ENCODE measurements at regions of chr3 and their contacts with region 1.

Region 1: GRCh38 chr3:66500576-66501482 is at the start of gene LRIG1:
- DNase-seq: peak; percentile 96 to 99
- H3K4me3 ChIP-seq: peak within 1 kb of the TSS; percentile 85 to 98
- H3K27ac ChIP-seq: peak within 1 kb of the TSS; percentile 90 to 92
- H3K4me1 ChIP-seq: peaks cover 0 to 23% of the 10 kb centered on the region in 2 donors
- H3K27me3 ChIP-seq: no peaks in the 10 kb centered on the region
- CTCF ChIP-seq: peak in 2 of 3 experiments; percentile 38 to 47
- total RNA-seq, gene LRIG1: 62.3 TPM

Region 2: DNA sequence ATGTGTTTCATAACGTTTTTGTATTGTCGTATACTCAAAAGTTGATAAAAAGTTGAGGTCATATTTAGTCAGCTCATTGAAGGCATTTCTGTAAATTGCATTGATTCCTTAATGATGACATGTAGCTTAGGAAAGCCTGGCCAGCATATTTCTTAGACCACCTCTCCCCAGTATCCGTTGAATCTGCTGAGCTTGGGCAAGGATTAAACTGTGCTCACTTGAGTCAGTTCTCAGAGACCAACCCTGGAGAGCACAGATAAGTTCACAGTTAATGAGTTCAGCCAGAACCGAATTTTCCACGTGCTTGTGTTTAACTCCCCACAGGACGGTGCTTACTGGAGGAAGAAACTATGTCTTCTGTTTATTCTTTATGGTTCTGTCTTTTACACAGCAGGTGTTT is 147.3 kb before region 1 on chr3:
- intact Hi-C with region 1: no loop called
- DNase-seq: no peak
- H3K4me3 ChIP-seq: no peak overlapping the region
- H3K27ac ChIP-seq: no peak overlapping the region
- H3K4me1 ChIP-seq: no peaks in the 10 kb centered on the region
- H3K27me3 ChIP-seq: no peaks in the 10 kb centered on the region
- CTCF ChIP-seq: no peak

Region 3: GRCh38 chr3:66397745-66398144 is 103.1 kb before region 1 on chr3:
- intact Hi-C with region 1: loop called (anchors 2 kb)
- DNase-seq: peak in 1 of 2 donors; percentile 62
- H3K4me3 ChIP-seq: no peak overlapping the region
- H3K27ac ChIP-seq: peak overlapping the region; percentile 44 to 75
- H3K4me1 ChIP-seq: peaks cover 28 to 60% of the 10 kb centered on the region in 2 donors
- H3K27me3 ChIP-seq: no peaks in the 10 kb centered on the region
- CTCF ChIP-seq: no peak

Region 4: DNA sequence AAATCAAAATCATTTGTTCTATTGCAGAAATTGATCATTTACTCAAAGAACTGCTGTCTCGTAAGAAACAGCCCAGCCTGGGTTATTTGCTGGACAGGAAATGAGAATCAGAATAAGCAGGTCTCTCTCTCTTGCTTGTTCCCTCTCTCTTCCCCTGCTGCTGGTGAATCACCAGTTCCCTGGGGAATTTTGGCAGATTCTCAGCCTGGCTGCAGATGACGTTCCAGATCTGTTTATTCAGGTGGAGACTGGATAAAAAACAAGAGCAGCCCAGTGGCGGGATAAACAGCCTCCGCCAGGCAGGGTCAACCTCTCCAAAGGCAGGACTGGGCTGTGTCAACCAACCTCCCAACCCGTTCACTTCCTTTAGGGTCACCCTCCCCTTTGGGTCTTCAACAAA is 72.1 kb before region 1 on chr3:
- intact Hi-C with region 1: loop called (anchors 2 kb)
- DNase-seq: peak in 1 of 2 donors; percentile 80
- H3K4me3 ChIP-seq: no peak overlapping the region
- H3K27ac ChIP-seq: peak overlapping the region; percentile 19 to 36
- H3K4me1 ChIP-seq: peaks cover 10 to 44% of the 10 kb centered on the region in 2 donors
- H3K27me3 ChIP-seq: no peaks in the 10 kb centered on the region
- CTCF ChIP-seq: no peak

Region 5: DNA sequence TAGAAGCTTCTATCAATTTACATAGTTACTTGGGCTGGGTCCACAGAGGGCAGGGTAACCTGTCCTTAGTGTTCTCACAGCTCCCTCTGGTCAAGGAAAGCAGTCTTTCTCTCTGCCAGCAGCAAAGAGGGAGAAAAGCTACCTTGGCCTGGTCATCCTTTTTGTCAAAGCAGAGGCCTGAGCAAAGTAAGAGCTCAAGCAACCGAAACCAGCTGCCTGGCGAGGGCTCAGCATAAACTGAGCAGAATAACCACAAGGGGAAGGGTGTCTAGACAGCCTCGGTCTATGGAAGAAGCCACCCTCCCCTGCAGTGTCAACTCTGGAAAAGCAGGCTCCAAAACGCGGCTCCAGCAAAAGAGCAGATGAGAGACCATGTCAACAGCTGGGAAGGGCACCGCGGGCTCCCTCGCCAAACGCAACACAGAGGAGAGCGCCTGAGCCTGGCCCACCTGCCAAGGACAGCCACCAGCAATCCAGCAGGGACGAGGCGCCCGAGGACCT is 17.4 kb before region 1 on chr3:
- intact Hi-C with region 1: loop called (anchors 2 kb)
- DNase-seq: no peak
- H3K4me3 ChIP-seq: peak overlapping the region in 1 of 2 donors; percentile 21
- H3K27ac ChIP-seq: peak overlapping the region; percentile 89 to 90
- H3K4me1 ChIP-seq: peaks cover 19 to 79% of the 10 kb centered on the region in 2 donors
- H3K27me3 ChIP-seq: no peaks in the 10 kb centered on the region
- CTCF ChIP-seq: no peak

Region 6: DNA sequence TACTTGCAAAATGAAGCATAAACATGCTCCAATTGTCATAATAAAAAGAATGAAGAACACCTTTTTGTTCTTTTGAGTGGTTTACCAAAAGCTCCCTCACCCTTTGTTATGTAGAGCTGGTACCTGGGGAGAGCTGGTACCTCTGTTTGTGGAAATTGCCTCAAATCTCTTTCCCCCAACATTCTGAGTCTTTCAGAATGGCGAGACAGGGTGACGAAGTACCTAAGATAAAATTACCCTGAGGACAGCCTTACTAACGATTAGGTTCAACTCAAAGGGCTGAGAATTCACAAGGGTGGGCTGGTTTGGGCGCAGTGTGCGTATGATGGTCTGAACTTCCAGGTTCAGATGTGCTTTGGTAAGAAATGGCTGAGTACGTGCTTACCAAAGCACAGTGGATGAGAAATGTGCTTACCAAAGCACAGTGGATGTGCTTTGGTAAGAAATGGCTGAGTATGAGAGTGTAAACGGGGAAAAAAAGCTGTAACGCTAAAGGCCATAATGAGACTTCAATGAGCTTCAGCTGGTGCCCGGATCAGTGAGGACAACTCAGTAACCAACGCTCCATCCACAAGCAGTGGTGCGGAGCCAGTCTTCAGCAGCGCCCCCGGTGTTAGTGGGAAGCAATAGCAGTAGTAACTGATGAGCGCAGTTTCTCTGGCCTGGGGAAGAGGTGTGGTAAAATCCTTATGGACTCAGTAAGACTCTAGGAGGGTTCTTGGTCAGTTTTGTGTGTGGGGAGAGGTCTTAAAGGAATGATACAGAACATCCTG is 72.3 kb after region 1 on chr3:
- intact Hi-C with region 1: no loop called
- DNase-seq: no peak
- H3K4me3 ChIP-seq: no peak overlapping the region
- H3K27ac ChIP-seq: no peak overlapping the region
- H3K4me1 ChIP-seq: no peaks in the 10 kb centered on the region
- H3K27me3 ChIP-seq: no peaks in the 10 kb centered on the region
- CTCF ChIP-seq: no peak

Region 7: DNA sequence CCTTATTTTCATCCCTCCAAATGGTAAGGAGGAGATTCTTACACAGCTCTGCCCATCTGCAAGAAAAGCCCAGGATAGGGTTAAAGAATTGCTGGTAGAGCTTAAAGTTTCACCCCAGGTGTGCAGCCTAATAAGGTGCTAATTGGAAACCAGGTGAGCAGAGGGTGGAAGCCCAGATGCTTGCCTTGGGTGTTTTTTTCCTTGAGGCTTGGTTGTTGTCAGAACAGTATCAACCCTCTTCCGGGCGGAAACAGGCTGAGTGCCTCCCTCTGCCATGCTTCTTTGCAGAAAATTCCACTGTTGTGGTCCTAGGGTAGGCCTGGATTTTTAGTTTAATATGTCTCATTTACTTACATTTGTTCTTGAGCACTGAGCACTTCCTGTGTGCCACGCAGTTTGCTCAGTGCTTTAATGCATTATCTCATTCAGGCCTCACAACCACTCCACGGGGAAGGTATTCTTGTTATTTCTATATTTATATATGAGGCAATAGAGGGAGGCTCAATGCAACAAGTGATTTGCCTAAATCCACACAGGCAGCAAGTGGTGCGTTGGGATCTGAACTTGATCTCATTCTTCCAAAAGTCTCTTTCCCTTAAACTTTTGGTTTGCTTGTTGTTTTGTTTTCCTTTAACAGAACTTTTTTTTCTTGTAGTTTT is 114.9 kb after region 1 on chr3:
- intact Hi-C with region 1: loop called (anchors 5 kb)
- DNase-seq: no peak
- H3K4me3 ChIP-seq: no peak overlapping the region
- H3K27ac ChIP-seq: peak overlapping the region; percentile 43 to 45
- H3K4me1 ChIP-seq: peaks cover 0 to 25% of the 10 kb centered on the region in 2 donors
- H3K27me3 ChIP-seq: no peaks in the 10 kb centered on the region
- CTCF ChIP-seq: no peak

Region 8: DNA sequence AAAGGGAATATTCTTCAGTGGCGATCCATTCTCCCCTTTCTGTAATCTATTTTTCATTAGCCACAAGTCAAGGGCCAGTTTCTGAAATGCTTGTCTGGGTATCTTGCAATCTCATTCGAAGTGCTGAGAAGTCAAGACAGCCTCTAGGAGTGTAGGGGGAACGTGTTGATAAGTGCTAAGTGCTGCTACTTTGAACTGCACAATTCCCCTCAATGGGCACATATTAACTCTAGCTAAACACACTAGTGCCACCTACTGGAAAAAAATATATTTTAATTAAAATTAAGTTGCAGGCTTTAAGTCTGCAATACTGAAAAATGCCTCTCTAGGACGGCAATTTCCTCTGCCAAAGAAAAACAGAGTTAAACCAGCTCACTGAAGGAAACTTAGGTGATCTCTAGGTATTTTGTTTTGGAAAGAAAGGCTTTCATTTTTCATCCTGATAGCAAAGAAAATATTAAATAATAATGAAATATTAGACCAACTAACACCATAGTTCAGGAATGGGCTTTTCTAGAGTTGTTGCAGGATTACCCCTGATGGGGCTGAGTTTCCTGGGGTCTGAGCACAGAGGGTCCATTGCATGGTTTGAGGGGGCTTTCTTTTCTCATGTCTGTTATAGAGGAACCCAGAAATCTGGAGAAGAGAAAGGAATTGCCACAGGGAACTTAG is 315.4 kb after region 1 on chr3:
- intact Hi-C with region 1: loop called (anchors 5 kb)
- DNase-seq: no peak
- H3K4me3 ChIP-seq: no peak overlapping the region
- H3K27ac ChIP-seq: no peak overlapping the region
- H3K4me1 ChIP-seq: no peaks in the 10 kb centered on the region
- H3K27me3 ChIP-seq: no peaks in the 10 kb centered on the region
- CTCF ChIP-seq: peak; percentile 48 to 73 (median 65)